ENCODE measurements at regions of chr7 and their contacts with region 1.

Region 1: GRCh38 chr7:79298145-79298760 is 155.2 kb downstream of the MAGI2 start:
- DNase-seq: no peak
- H3K4me3 ChIP-seq: no peak overlapping the region
- H3K27ac ChIP-seq: no peak overlapping the region
- H3K4me1 ChIP-seq: no peaks in the 10 kb centered on the region
- H3K27me3 ChIP-seq: no peaks in the 10 kb centered on the region
- CTCF ChIP-seq: peak in 2 of 3 experiments; percentile 38 to 53; a peak in 2 of 4 replicates
- EP300 ChIP-seq: no peak
- POLR2A ChIP-seq: no peak
- RAD21 ChIP-seq: peak; percentile 68 to 71

Region 2: GRCh38 chr7:79282063-79282694 is 16.1 kb before region 1 on chr7:
- CTCF ChIA-PET with region 1: interaction called, 19 read pairs
- POLR2A ChIA-PET with region 1: no interaction called
- DNase-seq: no peak
- H3K4me3 ChIP-seq: no peak overlapping the region
- H3K27ac ChIP-seq: no peak overlapping the region
- H3K4me1 ChIP-seq: no peaks in the 10 kb centered on the region
- H3K27me3 ChIP-seq: no peaks in the 10 kb centered on the region
- CTCF ChIP-seq: peak in 2 of 3 experiments; percentile 31 to 38; a peak in 3 of 4 replicates
- EP300 ChIP-seq: no peak
- POLR2A ChIP-seq: no peak
- RAD21 ChIP-seq: peak; percentile 46 to 49

Region 3: GRCh38 chr7:79504712-79505389 is 206.6 kb after region 1 on chr7:
- CTCF ChIA-PET with region 1: no interaction called
- POLR2A ChIA-PET with region 1: no interaction called
- DNase-seq: no peak
- H3K4me3 ChIP-seq: no peak overlapping the region
- H3K27ac ChIP-seq: no peak overlapping the region
- H3K4me1 ChIP-seq: peaks cover 0 to 7% (median 5%) of the 10 kb centered on the region in 4 experiments; a peak in 3 of 7 replicates
- H3K27me3 ChIP-seq: no peaks in the 10 kb centered on the region
- CTCF ChIP-seq: no peak
- EP300 ChIP-seq: no peak
- POLR2A ChIP-seq: no peak
- RAD21 ChIP-seq: no peak

Region 4: DNA sequence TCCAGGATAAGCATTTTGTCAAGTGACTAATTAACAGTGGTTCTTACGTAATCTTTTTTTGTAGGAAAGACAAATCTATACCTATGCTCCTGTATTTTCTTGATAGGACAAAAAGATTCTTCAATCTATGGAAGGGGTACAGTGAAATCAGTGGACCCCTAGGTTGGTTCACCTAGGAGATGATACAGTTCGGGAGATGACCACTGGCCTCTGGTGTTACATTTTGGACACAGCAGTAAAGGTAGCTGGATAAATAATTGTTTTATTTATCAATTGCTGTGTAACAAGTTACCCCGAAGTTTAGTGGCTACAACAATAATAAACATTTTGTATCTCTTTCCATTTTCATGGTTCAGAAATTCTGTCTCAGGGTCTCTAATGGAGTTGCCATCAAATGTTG is 443.4 kb after region 1 on chr7:
- CTCF ChIA-PET with region 1: interaction called, 10 read pairs
- POLR2A ChIA-PET with region 1: no interaction called
- DNase-seq: no peak
- H3K4me3 ChIP-seq: no peak overlapping the region
- H3K27ac ChIP-seq: no peak overlapping the region
- H3K4me1 ChIP-seq: no peaks in the 10 kb centered on the region
- H3K27me3 ChIP-seq: no peaks in the 10 kb centered on the region
- CTCF ChIP-seq: peak in 2 of 3 experiments; percentile 52; a peak in 3 of 4 replicates
- EP300 ChIP-seq: no peak
- POLR2A ChIP-seq: no peak
- RAD21 ChIP-seq: peak; percentile 87 to 88

Measured in H1 (cell line).